H1 (cell line): ENCODE measurements at regions of chr10 and their contacts with region 1.

Region 1: GRCh38 chr10:63901228-63901627 is 380.0 kb downstream of the REEP3 start:
- DNase-seq: peak in 1 of 2 experiments; percentile 58
- H3K4me3 ChIP-seq: no peak overlapping the region
- H3K27ac ChIP-seq: no peak overlapping the region
- H3K4me1 ChIP-seq: no peaks in the 10 kb centered on the region
- H3K27me3 ChIP-seq: no peaks in the 10 kb centered on the region
- CTCF ChIP-seq: peak; percentile 75 to 89 (median 82)
- EP300 ChIP-seq: no peak
- POLR2A ChIP-seq: no peak
- RAD21 ChIP-seq: peak; percentile 46 to 64; a peak in 3 of 4 replicates

Region 2: GRCh38 chr10:63866075-63866746 is 35.0 kb before region 1 on chr10:
- CTCF ChIA-PET with region 1: interaction called, 12 read pairs
- POLR2A ChIA-PET with region 1: no interaction called
- DNase-seq: peak; percentile 64 to 88
- H3K4me3 ChIP-seq: peak overlapping the region; percentile 3 to 49 (median 25); a peak in 5 of 8 replicates
- H3K27ac ChIP-seq: no peak overlapping the region
- H3K4me1 ChIP-seq: peaks cover 0 to 3% (median 2%) of the 10 kb centered on the region in 4 experiments; a peak in 4 of 7 replicates
- H3K27me3 ChIP-seq: no peaks in the 10 kb centered on the region
- CTCF ChIP-seq: peak; percentile 64 to 93 (median 82)
- EP300 ChIP-seq: no peak
- POLR2A ChIP-seq: no peak
- RAD21 ChIP-seq: peak; percentile 82 to 88

Region 3: GRCh38 chr10:63887023-63887589 is 14.1 kb before region 1 on chr10:
- CTCF ChIA-PET with region 1: interaction called, 17 read pairs
- POLR2A ChIA-PET with region 1: interaction called, 3 read pairs
- DNase-seq: peak; percentile 61 to 79
- H3K4me3 ChIP-seq: no peak overlapping the region
- H3K27ac ChIP-seq: no peak overlapping the region
- H3K4me1 ChIP-seq: peaks cover 0 to 5% (median 4%) of the 10 kb centered on the region in 4 experiments; a peak in 4 of 7 replicates
- H3K27me3 ChIP-seq: no peaks in the 10 kb centered on the region
- CTCF ChIP-seq: peak; percentile 82 to 85 (median 83)
- EP300 ChIP-seq: no peak
- POLR2A ChIP-seq: no peak
- RAD21 ChIP-seq: peak; percentile 67 to 73

Region 4: GRCh38 chr10:63917363-63917762 is 16.1 kb after region 1 on chr10:
- CTCF ChIA-PET with region 1: interaction called, 31 read pairs
- POLR2A ChIA-PET with region 1: no interaction called
- DNase-seq: no peak
- H3K4me3 ChIP-seq: no peak overlapping the region
- H3K27ac ChIP-seq: no peak overlapping the region
- H3K4me1 ChIP-seq: peaks cover 0 to 3% (median 0%) of the 10 kb centered on the region in 4 experiments; a peak in 2 of 7 replicates
- H3K27me3 ChIP-seq: no peaks in the 10 kb centered on the region
- CTCF ChIP-seq: no peak
- EP300 ChIP-seq: no peak
- POLR2A ChIP-seq: no peak
- RAD21 ChIP-seq: no peak

Region 5: GRCh38 chr10:63935705-63936104 is 34.5 kb after region 1 on chr10:
- CTCF ChIA-PET with region 1: interaction called, 12 read pairs
- POLR2A ChIA-PET with region 1: no interaction called
- DNase-seq: no peak
- H3K4me3 ChIP-seq: no peak overlapping the region
- H3K27ac ChIP-seq: no peak overlapping the region
- H3K4me1 ChIP-seq: peaks cover 0 to 2% (median 0%) of the 10 kb centered on the region in 4 experiments; a peak in 1 of 7 replicates
- H3K27me3 ChIP-seq: no peaks in the 10 kb centered on the region
- CTCF ChIP-seq: no peak
- EP300 ChIP-seq: no peak
- POLR2A ChIP-seq: no peak
- RAD21 ChIP-seq: no peak

Region 6: GRCh38 chr10:63987212-63987611 is 86.0 kb after region 1 on chr10:
- CTCF ChIA-PET with region 1: no interaction called
- POLR2A ChIA-PET with region 1: no interaction called
- DNase-seq: no peak
- H3K4me3 ChIP-seq: no peak overlapping the region
- H3K27ac ChIP-seq: no peak overlapping the region
- H3K4me1 ChIP-seq: no peaks in the 10 kb centered on the region
- H3K27me3 ChIP-seq: no peaks in the 10 kb centered on the region
- CTCF ChIP-seq: no peak
- EP300 ChIP-seq: no peak
- POLR2A ChIP-seq: no peak
- RAD21 ChIP-seq: no peak